ENCODE measurements at regions of chr19 and their contacts with region 1.

Region 1: DNA sequence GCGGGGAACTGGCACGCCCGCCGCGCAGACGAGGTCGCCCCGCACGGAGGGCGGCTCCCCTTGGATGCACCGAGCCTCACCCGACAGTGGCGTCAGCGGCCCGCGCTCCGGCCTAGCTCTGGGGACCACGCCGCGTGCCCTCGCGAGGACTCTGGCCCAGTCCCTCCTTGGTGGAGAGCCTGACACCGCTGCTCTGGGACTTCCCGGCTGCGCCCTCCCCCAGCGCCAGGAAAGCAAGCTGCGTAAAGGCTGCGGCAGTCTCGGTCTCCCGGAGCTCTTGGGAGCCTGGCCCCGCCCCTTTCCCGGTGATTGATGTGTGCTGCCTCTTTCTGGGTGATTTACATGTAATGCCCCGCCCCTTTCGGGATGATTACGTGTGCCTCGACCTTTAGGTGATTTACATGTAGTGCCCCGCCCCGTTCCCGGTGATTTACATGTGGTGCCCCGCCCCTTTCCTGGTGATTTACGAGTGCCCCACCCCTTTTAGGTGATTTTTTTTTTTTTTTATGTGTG is at the start of gene LENG9:
- DNase-seq: peak; percentile 100
- ATAC-seq: peak; percentile 69
- H3K4me3 Mint-ChIP-seq: peak within 1 kb of the TSS; percentile 80
- H3K27ac Mint-ChIP-seq: peak within 1 kb of the TSS; percentile 91
- H3K4me1 Mint-ChIP-seq: peaks cover 26% of the 10 kb centered on the region
- H3K27me3 Mint-ChIP-seq: peaks cover 6% of the 10 kb centered on the region
- total RNA-seq, gene LENG9: 5.0 to 5.1 TPM

Region 2: GRCh38 chr19:53195265-53195903 is 1268.2 kb before region 1 on chr19:
- CTCF ChIA-PET with region 1: no interaction called
- POLR2A ChIA-PET with region 1: no interaction called
- intact Hi-C with region 1: loop called in 1 of 2 experiments (anchors 10 kb)
- DNase-seq: peak; percentile 83
- ATAC-seq: peak; percentile 50
- H3K4me3 Mint-ChIP-seq: peak overlapping the region; percentile 22
- H3K27ac Mint-ChIP-seq: peak overlapping the region; percentile 8
- H3K4me1 Mint-ChIP-seq: peaks cover 33% of the 10 kb centered on the region
- H3K27me3 Mint-ChIP-seq: no peaks in the 10 kb centered on the region

Region 3: DNA sequence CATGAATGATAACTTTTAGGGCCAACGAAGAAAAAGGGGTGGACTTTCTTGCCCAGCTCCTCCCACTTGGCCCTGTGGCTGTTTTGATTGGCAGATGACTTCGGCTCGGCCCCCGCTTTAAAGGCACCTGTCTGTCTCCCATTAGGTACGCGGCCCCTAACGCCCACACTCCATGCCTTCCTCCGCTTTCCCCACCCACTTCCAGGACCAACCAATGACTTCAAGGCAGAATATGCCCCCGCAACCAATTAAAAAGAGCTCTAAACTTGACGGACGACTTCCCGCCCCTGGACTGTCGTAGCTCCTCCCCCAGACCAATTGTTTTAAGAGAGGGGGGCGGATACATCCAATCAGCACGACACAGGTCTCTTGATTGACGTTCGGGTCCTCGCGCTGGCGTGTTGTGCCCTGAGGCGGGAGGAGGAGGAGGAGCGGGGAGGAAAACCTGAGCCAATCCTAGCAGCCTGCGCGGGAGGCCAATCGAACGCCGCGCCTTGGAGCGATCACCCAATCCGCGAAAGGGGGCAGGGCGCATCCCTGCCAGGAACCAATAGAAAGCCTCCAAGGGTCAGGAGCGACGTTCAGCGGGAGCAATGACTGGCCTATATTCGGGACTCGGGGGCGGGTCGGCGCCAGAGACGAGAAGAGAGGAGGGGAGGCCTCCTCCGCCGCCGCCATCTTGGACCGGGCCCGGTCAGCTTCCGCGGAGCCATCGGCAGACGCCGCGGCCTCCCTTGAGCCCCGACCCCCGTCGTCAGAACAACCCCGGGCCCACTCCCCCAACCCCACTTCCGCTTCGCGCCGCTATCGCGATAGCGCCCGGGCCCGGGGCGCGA is 326.3 kb before region 1 on chr19 and contains the start of gene CNOT3:
- CTCF ChIA-PET with region 1: no interaction called
- POLR2A ChIA-PET with region 1: interaction called, 5 read pairs
- intact Hi-C with region 1: loop called in 1 of 2 experiments (anchors 1 kb)
- DNase-seq: peak; percentile 99
- ATAC-seq: peak; percentile 86
- H3K4me3 Mint-ChIP-seq: peak within 1 kb of the TSS; percentile 83
- H3K27ac Mint-ChIP-seq: peak within 1 kb of the TSS; percentile 91
- H3K4me1 Mint-ChIP-seq: peaks cover 44% of the 10 kb centered on the region
- H3K27me3 Mint-ChIP-seq: no peaks in the 10 kb centered on the region
- total RNA-seq, gene CNOT3: 61.0 to 93.8 TPM

Region 4: GRCh38 chr19:54448774-54449700 is 14.6 kb before region 1 on chr19 and contains the start of gene LENG8:
- CTCF ChIA-PET with region 1: interaction called, 5 read pairs
- POLR2A ChIA-PET with region 1: interaction called, 18 read pairs
- intact Hi-C with region 1: loop called (anchors 1 kb)
- DNase-seq: peak; percentile 98
- ATAC-seq: peak; percentile 92
- H3K4me3 Mint-ChIP-seq: peak within 1 kb of the TSS; percentile 98
- H3K27ac Mint-ChIP-seq: peak within 1 kb of the TSS; percentile 98
- H3K4me1 Mint-ChIP-seq: peaks cover 36% of the 10 kb centered on the region
- H3K27me3 Mint-ChIP-seq: no peaks in the 10 kb centered on the region
- total RNA-seq, gene LENG8: 156 to 221 TPM

Region 5: GRCh38 chr19:55279770-55280643 is 816.4 kb after region 1 on chr19 and contains the start of gene HSPBP1:
- CTCF ChIA-PET with region 1: no interaction called
- POLR2A ChIA-PET with region 1: no interaction called
- intact Hi-C with region 1: loop called in 1 of 2 experiments (anchors 1 kb)
- DNase-seq: peak; percentile 98
- ATAC-seq: peak; percentile 92
- H3K4me3 Mint-ChIP-seq: peak within 1 kb of the TSS; percentile 100
- H3K27ac Mint-ChIP-seq: peak within 1 kb of the TSS; percentile 98
- H3K4me1 Mint-ChIP-seq: peaks cover 24% of the 10 kb centered on the region
- H3K27me3 Mint-ChIP-seq: no peaks in the 10 kb centered on the region
- total RNA-seq, gene HSPBP1: 41.1 to 45.2 TPM

Region 6: DNA sequence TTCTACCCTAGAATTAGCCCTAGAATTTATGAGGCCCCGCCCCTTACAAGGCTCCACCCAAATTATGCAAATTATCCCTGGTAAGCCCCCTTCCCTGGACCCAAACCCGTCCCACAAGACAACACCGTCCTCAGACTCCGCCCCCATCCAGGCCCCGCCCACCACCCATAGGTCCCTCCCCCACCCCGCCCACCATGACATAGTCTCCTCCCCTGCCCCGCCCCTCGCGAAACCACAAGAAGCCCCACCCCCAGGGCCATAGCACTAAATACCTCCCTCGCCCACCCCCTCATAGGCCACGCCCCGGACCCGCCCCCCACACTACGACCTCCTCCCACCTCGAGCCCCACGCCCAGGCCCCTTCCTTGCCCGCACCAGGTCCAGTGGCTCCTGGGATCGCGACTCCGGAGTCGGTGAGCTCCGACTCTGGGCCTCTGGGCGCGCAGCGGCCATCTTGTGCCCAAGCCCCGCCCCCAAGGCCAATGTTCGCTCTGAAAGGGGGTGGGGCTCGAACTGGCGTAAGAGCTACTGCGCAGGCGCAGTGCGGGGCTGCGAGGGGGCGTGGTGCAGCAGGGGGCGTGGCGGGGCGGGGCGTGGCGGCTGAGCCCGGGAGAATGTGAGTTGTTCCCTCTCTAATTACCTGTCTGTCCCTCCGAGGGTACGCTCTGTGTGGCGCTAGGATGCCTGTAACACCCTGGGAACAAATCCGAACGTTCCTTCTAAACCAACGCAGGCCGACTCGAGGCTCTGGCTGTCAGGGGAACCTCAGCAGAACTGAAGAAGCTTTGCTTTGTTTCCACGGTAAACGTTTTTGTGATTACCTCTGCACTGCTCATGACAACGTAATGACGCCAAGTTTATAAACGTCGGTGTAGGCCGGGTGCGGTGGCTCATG is 1160.8 kb after region 1 on chr19 and contains the start of gene ZNF784:
- CTCF ChIA-PET with region 1: no interaction called
- POLR2A ChIA-PET with region 1: no interaction called
- intact Hi-C with region 1: loop called in 1 of 2 experiments (anchors 1 kb)
- DNase-seq: peak; percentile 97
- ATAC-seq: peak; percentile 70
- H3K4me3 Mint-ChIP-seq: peak within 1 kb of the TSS; percentile 79
- H3K27ac Mint-ChIP-seq: peak within 1 kb of the TSS; percentile 85
- H3K4me1 Mint-ChIP-seq: peaks cover 53% of the 10 kb centered on the region
- H3K27me3 Mint-ChIP-seq: no peaks in the 10 kb centered on the region
- total RNA-seq, gene ZNF784: 3.2 to 4.3 TPM

Measured in activated CD4-positive, alpha-beta T cell treated with anti-CD3 and anti-CD28 coated beads for 36 hours (primary cell).